ENCODE measurements at regions of chr14 and their contacts with region 1.

Region 1: DNA sequence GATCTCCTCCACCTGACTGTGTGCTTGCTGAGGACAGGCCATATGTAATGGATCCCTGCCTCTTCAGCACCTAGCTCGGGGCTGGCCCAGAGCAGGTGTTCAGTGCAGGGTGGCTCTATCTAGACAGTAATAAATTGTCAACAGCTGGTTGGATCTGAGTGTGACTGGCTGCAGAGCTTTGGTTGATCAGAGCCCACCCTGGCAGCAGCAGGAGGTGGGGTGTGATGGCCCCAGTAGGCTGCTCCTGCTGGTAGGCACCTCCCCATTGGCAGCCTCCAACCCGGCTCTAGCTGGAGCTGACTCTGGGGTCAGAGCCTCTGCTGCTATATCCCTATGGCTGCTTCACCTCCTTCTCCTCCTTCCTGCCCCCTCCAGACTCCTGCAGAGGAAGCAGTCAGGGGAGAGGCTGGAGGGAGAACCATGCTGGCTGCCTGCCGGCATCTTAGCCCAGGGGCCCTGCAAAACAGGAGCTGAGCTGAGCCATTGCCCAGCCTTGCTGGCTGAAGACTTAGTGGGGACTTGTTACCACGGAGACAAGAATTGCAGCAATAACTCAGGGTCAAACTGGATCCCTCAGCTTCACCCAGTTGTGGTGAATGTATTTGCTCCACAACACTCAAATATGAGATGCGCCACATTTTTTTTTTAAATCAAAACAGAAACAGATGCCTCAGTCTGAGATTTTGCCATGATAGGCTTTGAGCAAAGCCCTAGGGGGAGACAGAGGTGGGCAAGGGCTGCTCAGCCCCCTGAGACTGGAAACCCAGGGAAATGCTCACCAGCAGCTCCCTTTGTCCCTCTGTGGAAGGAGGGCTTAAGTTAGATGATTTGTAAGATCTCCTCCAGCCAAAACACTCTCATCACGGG is 22.2 kb downstream of the TMEM63C start:
- DNase-seq: no peak
- H3K4me3 ChIP-seq: no peak overlapping the region
- H3K27ac ChIP-seq: no peak overlapping the region
- H3K4me1 ChIP-seq: peaks cover 0 to 11% (median 8%) of the 10 kb centered on the region in 4 experiments; a peak in 5 of 7 replicates
- H3K27me3 ChIP-seq: no peaks in the 10 kb centered on the region
- CTCF ChIP-seq: no peak
- EP300 ChIP-seq: no peak
- POLR2A ChIP-seq: no peak
- RAD21 ChIP-seq: no peak

Region 2: GRCh38 chr14:77097700-77098528 is 105.9 kb before region 1 on chr14 and contains the start of gene CIPC:
- CTCF ChIA-PET with region 1: no interaction called
- POLR2A ChIA-PET with region 1: no interaction called
- DNase-seq: peak; percentile 95 to 98
- H3K4me3 ChIP-seq: peak within 1 kb of the TSS; percentile 87 to 96 (median 88)
- H3K27ac ChIP-seq: peak within 1 kb of the TSS; percentile 86
- H3K4me1 ChIP-seq: peaks cover 0 to 8% (median 4%) of the 10 kb centered on the region in 4 experiments; a peak in 4 of 7 replicates
- H3K27me3 ChIP-seq: no peaks in the 10 kb centered on the region
- CTCF ChIP-seq: no peak
- EP300 ChIP-seq: peak in 1 of 2 experiments; percentile 60; a peak in 1 of 3 replicates
- POLR2A ChIP-seq: no peak
- RAD21 ChIP-seq: peak; percentile 13 to 16; a peak in 2 of 4 replicates
- total RNA-seq, gene CIPC: 31.7 and 32.7 TPM in 2 replicates

Region 3: GRCh38 chr14:77139540-77140358 is 64.1 kb before region 1 on chr14:
- CTCF ChIA-PET with region 1: interaction called, 13 read pairs
- POLR2A ChIA-PET with region 1: interaction called, 7 read pairs
- DNase-seq: peak in 1 of 2 experiments; percentile 93
- H3K4me3 ChIP-seq: peak overlapping the region; percentile 69 to 79 (median 78)
- H3K27ac ChIP-seq: no peak overlapping the region
- H3K4me1 ChIP-seq: peaks cover 9 to 37% (median 22%) of the 10 kb centered on the region in 4 experiments
- H3K27me3 ChIP-seq: peaks cover 0 to 4% (median 2%) of the 10 kb centered on the region in 4 experiments; a peak in 3 of 7 replicates
- CTCF ChIP-seq: peak; percentile 73 to 90 (median 79)
- EP300 ChIP-seq: peak in 1 of 2 experiments; percentile 51; a peak in 1 of 3 replicates
- POLR2A ChIP-seq: no peak
- RAD21 ChIP-seq: peak; percentile 76 to 77

Region 4: GRCh38 chr14:77186911-77187648 is 16.8 kb before region 1 on chr14:
- CTCF ChIA-PET with region 1: interaction called, 178 read pairs
- POLR2A ChIA-PET with region 1: interaction called, 5 read pairs
- DNase-seq: no peak
- H3K4me3 ChIP-seq: no peak overlapping the region
- H3K27ac ChIP-seq: no peak overlapping the region
- H3K4me1 ChIP-seq: peaks cover 0 to 10% (median 3%) of the 10 kb centered on the region in 4 experiments; a peak in 6 of 7 replicates
- H3K27me3 ChIP-seq: peaks cover 0 to 3% (median 1%) of the 10 kb centered on the region in 4 experiments; a peak in 3 of 7 replicates
- CTCF ChIP-seq: no peak
- EP300 ChIP-seq: no peak
- POLR2A ChIP-seq: no peak
- RAD21 ChIP-seq: no peak

Measured in H1 (cell line).